Caco-2 (cell line): ENCODE measurements at regions of chrX and their contacts with region 1.

Region 1: GRCh38 chrX:41084044-41084892 is 977 bp upstream of the USP9X start:
- DNase-seq: peak; percentile 96 to 97
- H3K4me3 ChIP-seq: peak overlapping the region; percentile 92
- H3K4me3 Mint-ChIP-seq: peak overlapping the region; percentile 81
- H3K27ac Mint-ChIP-seq: peak overlapping the region; percentile 98
- H3K4me1 ChIP-seq: peaks cover 10% of the 10 kb centered on the region
- H3K4me1 Mint-ChIP-seq: no peaks in the 10 kb centered on the region
- H3K27me3 ChIP-seq: no peaks in the 10 kb centered on the region
- H3K27me3 Mint-ChIP-seq: no peaks in the 10 kb centered on the region
- CTCF ChIP-seq: no peak

Region 2: DNA sequence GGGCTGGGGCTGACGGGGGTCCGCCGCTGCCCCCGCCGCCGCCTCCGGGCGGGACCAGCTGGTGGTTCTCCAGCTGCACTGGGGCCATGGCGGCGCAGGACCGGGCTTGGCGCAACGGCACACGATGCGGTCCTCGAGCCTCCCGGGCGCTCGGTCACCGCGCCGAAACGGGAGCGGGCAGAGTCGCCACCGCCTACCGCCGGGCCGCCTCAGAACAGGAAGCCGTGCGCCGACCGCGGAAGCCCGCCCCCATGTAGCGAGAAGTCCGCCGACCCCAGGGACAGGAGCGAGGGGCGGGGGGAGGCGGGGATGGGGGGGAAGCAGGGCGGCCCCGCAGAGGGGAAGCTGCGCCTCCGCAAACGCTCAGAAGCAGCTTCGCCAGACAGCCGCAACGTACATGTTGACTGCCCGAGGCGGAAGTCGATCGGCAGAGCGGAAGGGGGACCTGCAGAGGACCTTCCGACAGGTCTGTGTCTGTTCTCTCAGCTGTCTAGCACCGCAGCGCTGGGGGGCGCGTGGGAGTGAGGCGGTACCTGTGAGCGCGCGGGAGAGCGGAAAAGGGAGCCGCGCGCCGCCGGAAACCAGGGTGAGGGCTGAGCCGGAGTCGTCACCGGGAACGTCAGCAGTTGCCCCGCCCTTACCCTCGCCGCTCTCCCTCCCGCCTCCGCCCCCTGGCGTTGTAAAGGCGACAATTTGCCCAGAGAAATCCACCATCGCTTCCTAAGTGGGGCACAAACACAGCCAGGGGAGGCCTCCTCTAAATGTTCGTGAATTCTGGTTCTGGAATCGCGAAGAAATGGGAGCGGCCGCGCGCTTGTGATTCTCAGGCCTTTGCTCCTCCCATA is 348.7 kb before region 1 on chrX and contains the start of gene MED14:
- CTCF ChIA-PET with region 1: no interaction called
- POLR2A ChIA-PET with region 1: no interaction called
- intact Hi-C with region 1: loop called (anchors 10 kb)
- DNase-seq: peak; percentile 89 to 90
- H3K4me3 ChIP-seq: peak within 1 kb of the TSS; percentile 69
- H3K4me3 Mint-ChIP-seq: peak within 1 kb of the TSS; percentile 83
- H3K27ac Mint-ChIP-seq: peak within 1 kb of the TSS; percentile 89
- H3K4me1 ChIP-seq: no peaks in the 10 kb centered on the region; the same call in 1 of the 2 replicates
- H3K4me1 Mint-ChIP-seq: peaks cover 26% of the 10 kb centered on the region
- H3K27me3 ChIP-seq: no peaks in the 10 kb centered on the region
- H3K27me3 Mint-ChIP-seq: no peaks in the 10 kb centered on the region
- CTCF ChIP-seq: peak; percentile 54 to 55
- total RNA-seq, gene MED14: 42.6 and 44.0 TPM in 2 replicates

Region 3: DNA sequence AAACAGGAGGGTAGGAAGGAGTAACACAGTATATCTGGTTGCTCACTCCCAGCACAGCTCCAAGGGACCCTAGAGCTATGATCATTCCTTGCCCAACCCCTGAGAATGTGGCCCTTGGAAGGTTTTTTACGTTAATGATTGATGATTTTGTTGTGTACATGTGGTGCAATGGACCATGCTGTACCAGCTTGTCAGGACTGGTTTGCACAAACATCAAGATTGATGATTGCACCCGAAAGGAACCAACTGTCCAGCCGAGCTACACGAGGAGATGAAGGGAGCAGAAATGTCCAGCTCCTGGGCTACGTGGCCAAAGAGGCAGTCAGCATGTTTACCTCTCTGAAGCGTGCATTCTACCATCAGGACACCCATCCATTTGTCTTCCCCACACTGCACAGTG is 82.2 kb before region 1 on chrX:
- CTCF ChIA-PET with region 1: interaction called, 3 read pairs
- POLR2A ChIA-PET with region 1: interaction called, 12 read pairs
- intact Hi-C with region 1: loop called (anchors 2 kb)
- DNase-seq: peak; percentile 52 to 62
- H3K4me3 ChIP-seq: no peak overlapping the region
- H3K4me3 Mint-ChIP-seq: peak overlapping the region; percentile 27
- H3K27ac Mint-ChIP-seq: peak overlapping the region; percentile 25
- H3K4me1 ChIP-seq: peaks cover 20% of the 10 kb centered on the region
- H3K4me1 Mint-ChIP-seq: peaks cover 12% of the 10 kb centered on the region
- H3K27me3 ChIP-seq: no peaks in the 10 kb centered on the region
- H3K27me3 Mint-ChIP-seq: no peaks in the 10 kb centered on the region
- CTCF ChIP-seq: no peak

Region 4: DNA sequence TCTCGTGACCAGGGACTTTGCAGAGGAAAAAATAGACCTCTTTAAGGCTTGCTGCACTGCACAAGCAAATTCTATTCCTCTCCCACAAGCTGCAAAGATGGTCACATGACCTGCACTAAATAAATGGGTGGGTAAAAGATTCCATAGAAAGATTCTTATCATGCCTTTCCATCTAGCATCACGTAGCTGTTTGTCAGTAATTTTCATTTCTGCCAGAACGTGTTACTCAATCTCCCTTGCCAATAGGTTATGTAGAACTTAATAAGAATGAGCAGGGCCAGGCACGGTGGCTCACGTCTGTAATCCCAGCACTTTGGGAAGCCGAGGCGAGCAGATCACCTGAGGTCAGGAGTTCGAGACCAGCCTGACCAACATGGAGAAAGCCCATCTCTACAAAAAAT is 56.8 kb before region 1 on chrX:
- CTCF ChIA-PET with region 1: no interaction called
- POLR2A ChIA-PET with region 1: interaction called, 4 read pairs
- intact Hi-C with region 1: loop called (anchors 2 kb)
- DNase-seq: no peak
- H3K4me3 ChIP-seq: no peak overlapping the region
- H3K4me3 Mint-ChIP-seq: no peak overlapping the region
- H3K27ac Mint-ChIP-seq: no peak overlapping the region
- H3K4me1 ChIP-seq: peaks cover 3% of the 10 kb centered on the region
- H3K4me1 Mint-ChIP-seq: no peaks in the 10 kb centered on the region
- H3K27me3 ChIP-seq: no peaks in the 10 kb centered on the region
- H3K27me3 Mint-ChIP-seq: no peaks in the 10 kb centered on the region
- CTCF ChIP-seq: no peak

Region 5: GRCh38 chrX:41116948-41117347 is 32.7 kb after region 1 on chrX:
- CTCF ChIA-PET with region 1: interaction called, 10 read pairs
- POLR2A ChIA-PET with region 1: no interaction called
- intact Hi-C with region 1: no loop called
- DNase-seq: no peak
- H3K4me3 ChIP-seq: no peak overlapping the region
- H3K4me3 Mint-ChIP-seq: no peak overlapping the region
- H3K27ac Mint-ChIP-seq: no peak overlapping the region
- H3K4me1 ChIP-seq: no peaks in the 10 kb centered on the region
- H3K4me1 Mint-ChIP-seq: peaks cover 7% of the 10 kb centered on the region
- H3K27me3 ChIP-seq: no peaks in the 10 kb centered on the region
- H3K27me3 Mint-ChIP-seq: no peaks in the 10 kb centered on the region
- CTCF ChIP-seq: no peak

Region 6: DNA sequence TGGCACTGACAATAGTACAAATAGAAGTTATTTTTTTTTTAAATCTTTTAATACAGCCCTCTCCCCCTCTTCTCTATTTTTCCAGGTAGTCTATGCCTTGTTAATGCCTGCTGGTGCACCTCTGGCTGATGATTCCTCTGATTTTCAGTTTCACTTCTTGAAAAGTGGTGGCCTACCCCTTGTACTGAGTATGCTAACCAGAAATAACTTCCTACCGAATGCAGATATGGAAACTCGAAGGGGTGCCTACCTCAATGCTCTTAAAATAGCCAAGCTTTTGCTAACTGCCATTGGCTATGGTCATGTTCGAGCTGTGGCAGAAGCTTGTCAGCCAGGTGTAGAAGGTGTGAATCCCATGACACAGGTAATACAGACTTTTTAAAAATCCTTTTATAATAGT is 100.0 kb after region 1 on chrX:
- CTCF ChIA-PET with region 1: no interaction called
- POLR2A ChIA-PET with region 1: no interaction called
- intact Hi-C with region 1: no loop called
- DNase-seq: no peak
- H3K4me3 ChIP-seq: no peak overlapping the region
- H3K4me3 Mint-ChIP-seq: no peak overlapping the region
- H3K27ac Mint-ChIP-seq: no peak overlapping the region
- H3K4me1 ChIP-seq: no peaks in the 10 kb centered on the region
- H3K4me1 Mint-ChIP-seq: no peaks in the 10 kb centered on the region
- H3K27me3 ChIP-seq: no peaks in the 10 kb centered on the region
- H3K27me3 Mint-ChIP-seq: no peaks in the 10 kb centered on the region
- CTCF ChIP-seq: no peak

Region 7: GRCh38 chrX:41333744-41334259 is 249.5 kb after region 1 on chrX and contains the start of gene DDX3X:
- CTCF ChIA-PET with region 1: no interaction called
- POLR2A ChIA-PET with region 1: no interaction called
- intact Hi-C with region 1: loop called (anchors 10 kb)
- DNase-seq: peak; percentile 83 to 84
- H3K4me3 ChIP-seq: peak within 1 kb of the TSS; percentile 85
- H3K4me3 Mint-ChIP-seq: peak within 1 kb of the TSS; percentile 88
- H3K27ac Mint-ChIP-seq: peak within 1 kb of the TSS; percentile 100
- H3K4me1 ChIP-seq: peaks cover 8% of the 10 kb centered on the region; the same call in 1 of the 2 replicates
- H3K4me1 Mint-ChIP-seq: no peaks in the 10 kb centered on the region
- H3K27me3 ChIP-seq: no peaks in the 10 kb centered on the region
- H3K27me3 Mint-ChIP-seq: no peaks in the 10 kb centered on the region
- CTCF ChIP-seq: no peak
- total RNA-seq, gene DDX3X: 281 and 302 TPM in 2 replicates

Region 8: DNA sequence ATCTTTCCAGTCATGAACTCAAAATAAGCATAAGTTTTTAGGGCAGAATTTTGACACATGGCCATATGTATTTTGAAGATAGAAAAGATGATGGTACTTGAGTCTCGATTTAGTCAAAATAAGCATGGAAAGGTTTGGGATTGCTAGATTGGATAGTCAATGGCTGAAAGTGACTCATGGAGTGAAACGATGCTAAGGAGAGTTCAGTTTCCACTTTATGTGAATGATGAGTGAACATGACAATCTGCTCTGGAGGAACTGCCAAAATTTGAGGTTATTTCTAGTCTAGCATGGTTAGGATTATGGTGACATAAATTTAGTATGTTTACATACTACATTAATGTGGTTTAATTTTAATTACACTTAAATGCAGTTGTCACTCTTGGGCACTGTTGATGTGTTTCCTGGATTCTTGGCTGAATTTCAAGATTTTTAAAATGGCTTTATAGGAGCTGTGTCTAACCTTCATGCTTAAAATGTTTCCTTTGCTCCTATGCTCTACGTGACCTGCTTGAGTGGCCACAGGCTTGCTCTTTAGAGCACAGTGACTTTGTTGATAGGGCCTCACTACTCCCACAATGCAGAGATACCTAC is 266.8 kb after region 1 on chrX:
- CTCF ChIA-PET with region 1: no interaction called
- POLR2A ChIA-PET with region 1: no interaction called
- intact Hi-C with region 1: no loop called
- DNase-seq: no peak
- H3K4me3 ChIP-seq: no peak overlapping the region
- H3K4me3 Mint-ChIP-seq: no peak overlapping the region
- H3K27ac Mint-ChIP-seq: peak overlapping the region; percentile 29
- H3K4me1 ChIP-seq: no peaks in the 10 kb centered on the region
- H3K4me1 Mint-ChIP-seq: no peaks in the 10 kb centered on the region
- H3K27me3 ChIP-seq: no peaks in the 10 kb centered on the region
- H3K27me3 Mint-ChIP-seq: no peaks in the 10 kb centered on the region
- CTCF ChIP-seq: no peak